ENCODE measurements at regions of chr19 and their contacts with region 1.

Region 1: DNA sequence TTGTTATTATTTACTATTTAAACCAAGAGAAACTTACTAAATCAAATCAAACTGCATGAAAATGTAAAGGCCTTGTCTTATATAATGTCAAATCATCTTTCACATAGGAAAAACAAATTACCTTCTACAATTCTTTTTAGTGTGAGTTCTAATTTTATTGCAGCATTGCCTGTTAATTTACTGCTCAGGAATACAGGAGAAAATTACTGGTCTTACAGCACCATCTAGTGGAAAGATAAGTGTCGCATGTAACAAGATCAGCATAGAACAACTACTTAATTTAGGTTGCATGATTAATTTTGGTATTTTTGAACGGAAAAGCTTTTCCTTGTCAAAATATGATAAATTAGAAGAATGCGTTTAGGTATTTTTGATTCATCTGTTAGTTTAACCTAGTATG is 502.7 kb downstream of the UQCRFS1 start:
- DNase-seq: no peak
- ATAC-seq: no peak
- H3K4me3 Mint-ChIP-seq: no peak overlapping the region
- H3K27ac Mint-ChIP-seq: no peak overlapping the region
- H3K4me1 Mint-ChIP-seq: no peaks in the 10 kb centered on the region
- H3K27me3 Mint-ChIP-seq: no peaks in the 10 kb centered on the region
- CTCF ChIP-seq: no peak

Region 2: GRCh38 chr19:28239270-28239669 is 471.0 kb before region 1 on chr19:
- CTCF ChIA-PET with region 1: no interaction called
- POLR2A ChIA-PET with region 1: no interaction called
- intact Hi-C with region 1: loop called (anchors 5 kb)
- DNase-seq: no peak
- ATAC-seq: no peak
- H3K4me3 Mint-ChIP-seq: no peak overlapping the region
- H3K27ac Mint-ChIP-seq: no peak overlapping the region
- H3K4me1 Mint-ChIP-seq: no peaks in the 10 kb centered on the region
- H3K27me3 Mint-ChIP-seq: no peaks in the 10 kb centered on the region
- CTCF ChIP-seq: no peak

Region 3: GRCh38 chr19:28324275-28325060 is 385.8 kb before region 1 on chr19:
- CTCF ChIA-PET with region 1: no interaction called
- POLR2A ChIA-PET with region 1: no interaction called
- intact Hi-C with region 1: loop called (anchors 5 kb)
- DNase-seq: no peak
- ATAC-seq: no peak
- H3K4me3 Mint-ChIP-seq: no peak overlapping the region
- H3K27ac Mint-ChIP-seq: no peak overlapping the region
- H3K4me1 Mint-ChIP-seq: no peaks in the 10 kb centered on the region
- H3K27me3 Mint-ChIP-seq: no peaks in the 10 kb centered on the region
- CTCF ChIP-seq: no peak

Region 4: GRCh38 chr19:28466107-28467045 is 243.9 kb before region 1 on chr19:
- CTCF ChIA-PET with region 1: no interaction called
- POLR2A ChIA-PET with region 1: no interaction called
- intact Hi-C with region 1: loop called (anchors 1 kb)
- DNase-seq: no peak
- ATAC-seq: no peak
- H3K4me3 Mint-ChIP-seq: no peak overlapping the region
- H3K27ac Mint-ChIP-seq: no peak overlapping the region
- H3K4me1 Mint-ChIP-seq: peaks cover 6% of the 10 kb centered on the region
- H3K27me3 Mint-ChIP-seq: no peaks in the 10 kb centered on the region
- CTCF ChIP-seq: no peak

Region 5: DNA sequence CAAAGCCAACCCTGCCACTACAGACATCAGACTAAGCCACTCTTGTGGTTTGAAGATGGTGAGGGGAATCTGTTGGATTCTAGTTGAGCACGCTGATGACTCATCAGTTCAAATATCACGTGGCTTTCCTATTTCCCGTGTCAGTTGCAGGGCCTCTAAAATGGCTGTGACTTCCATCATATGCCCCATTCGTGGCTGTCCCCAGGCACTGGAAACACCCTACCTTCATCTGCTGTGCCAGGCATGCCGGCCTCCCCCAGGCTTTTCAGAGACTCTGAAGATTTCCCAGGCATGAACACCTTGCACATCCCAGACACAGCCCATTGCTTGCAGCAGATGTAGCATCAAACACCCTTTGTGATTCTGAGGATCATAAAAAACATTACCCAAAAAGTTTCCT is 157.3 kb before region 1 on chr19:
- CTCF ChIA-PET with region 1: no interaction called
- POLR2A ChIA-PET with region 1: no interaction called
- intact Hi-C with region 1: no loop called
- DNase-seq: no peak
- ATAC-seq: no peak
- H3K4me3 Mint-ChIP-seq: no peak overlapping the region
- H3K27ac Mint-ChIP-seq: no peak overlapping the region
- H3K4me1 Mint-ChIP-seq: no peaks in the 10 kb centered on the region
- H3K27me3 Mint-ChIP-seq: no peaks in the 10 kb centered on the region
- CTCF ChIP-seq: no peak